Activated T-helper 2 cell treated with anti-CD3 and anti-CD28 coated beads, Interferon-gamma antibody, Interleukin-2, Interleukin-4, amounts not matched to agents 10 μg/mL and 5 μg/mL and 100 μg/mL, durations not matched to agents 14 hours and 24 hours and 36 hours (primary cell): ENCODE measurements at regions of chr15 and their contacts with region 1.

Region 1: GRCh38 chr15:84883433-84883832 is 1.0 kb upstream of the SLC28A1 start:
- DNase-seq: no peak
- H3K4me3 Mint-ChIP-seq: no peak overlapping the region
- H3K27ac Mint-ChIP-seq: no peak overlapping the region
- H3K4me1 Mint-ChIP-seq: no peaks in the 10 kb centered on the region
- H3K27me3 Mint-ChIP-seq: no peaks in the 10 kb centered on the region

Region 2: GRCh38 chr15:84588053-84588874 is 295.2 kb before region 1 on chr15:
- intact Hi-C with region 1: loop called (anchors 1 kb)
- DNase-seq: peak; percentile 77
- H3K4me3 Mint-ChIP-seq: peak overlapping the region; percentile 27
- H3K27ac Mint-ChIP-seq: no peak overlapping the region
- H3K4me1 Mint-ChIP-seq: peaks cover 3% of the 10 kb centered on the region
- H3K27me3 Mint-ChIP-seq: peaks cover 26% of the 10 kb centered on the region